ENCODE measurements at regions of chr12 and their contacts with region 1.

Region 1: GRCh38 chr12:4276524-4277204 is 3.1 kb downstream of the CCND2 start:
- DNase-seq: peak; percentile 89
- ATAC-seq: peak; percentile 51

Region 2: DNA sequence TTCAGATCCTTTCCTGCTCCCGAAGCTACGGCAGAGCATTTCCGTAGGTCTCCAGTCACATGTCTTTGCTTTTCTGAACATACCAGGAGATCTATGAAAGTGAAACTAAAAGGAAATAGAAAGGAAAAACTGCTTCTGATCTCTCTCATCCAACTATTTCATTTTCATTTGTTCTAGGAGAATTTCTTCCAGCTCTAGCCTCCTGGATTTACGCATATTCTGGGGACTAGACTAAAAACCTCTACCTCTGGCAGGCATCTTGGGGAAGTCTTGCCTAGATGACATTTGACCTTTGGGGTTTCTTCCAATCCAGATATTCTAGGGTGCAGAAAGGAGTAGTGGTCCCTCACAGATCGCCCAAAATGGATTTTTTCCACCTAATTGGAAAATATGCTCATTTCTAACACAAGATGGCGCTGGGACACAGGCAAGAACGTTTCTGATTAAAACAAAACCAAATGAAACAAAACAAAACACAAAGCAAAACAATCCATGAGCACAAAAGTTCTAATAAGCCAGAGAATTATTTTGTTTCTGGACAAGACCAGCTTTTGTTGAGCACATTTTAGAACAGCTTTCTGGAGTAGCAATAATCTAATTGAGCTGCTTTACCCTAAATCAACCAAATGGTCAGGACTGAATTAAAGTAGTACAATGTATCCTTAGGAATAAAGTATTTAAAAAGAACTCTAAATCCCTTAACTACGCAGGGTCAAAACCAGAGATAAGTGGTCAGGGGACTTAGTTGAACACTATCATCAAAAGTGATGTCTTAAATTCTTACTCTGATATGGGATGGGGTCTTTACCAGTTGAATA is 391.2 kb before region 1 on chr12:
- intact Hi-C with region 1: loop called (anchors 1 kb)
- DNase-seq: no peak
- ATAC-seq: peak; percentile 39

Region 3: DNA sequence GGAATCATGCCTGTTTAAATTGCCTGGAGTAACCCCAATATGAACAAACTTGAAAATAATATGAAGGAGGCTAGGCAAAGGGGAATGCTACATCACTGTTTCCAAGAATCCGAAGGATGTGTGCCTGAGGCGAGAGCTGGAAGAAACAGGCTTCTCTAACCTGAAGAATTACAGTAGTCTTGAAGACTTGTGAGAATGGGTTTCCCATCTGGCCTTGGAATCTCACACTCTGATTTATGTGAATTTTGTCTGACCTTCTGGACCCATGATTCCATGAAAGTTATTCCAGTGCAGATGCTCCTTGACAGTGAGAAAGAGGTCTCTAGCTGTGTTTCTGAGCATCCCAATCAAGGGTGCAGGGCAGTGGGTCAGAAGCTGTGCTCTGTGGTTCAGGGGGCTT is 281.4 kb before region 1 on chr12:
- intact Hi-C with region 1: loop called (anchors 1 kb)
- DNase-seq: no peak
- ATAC-seq: no peak

Region 4: DNA sequence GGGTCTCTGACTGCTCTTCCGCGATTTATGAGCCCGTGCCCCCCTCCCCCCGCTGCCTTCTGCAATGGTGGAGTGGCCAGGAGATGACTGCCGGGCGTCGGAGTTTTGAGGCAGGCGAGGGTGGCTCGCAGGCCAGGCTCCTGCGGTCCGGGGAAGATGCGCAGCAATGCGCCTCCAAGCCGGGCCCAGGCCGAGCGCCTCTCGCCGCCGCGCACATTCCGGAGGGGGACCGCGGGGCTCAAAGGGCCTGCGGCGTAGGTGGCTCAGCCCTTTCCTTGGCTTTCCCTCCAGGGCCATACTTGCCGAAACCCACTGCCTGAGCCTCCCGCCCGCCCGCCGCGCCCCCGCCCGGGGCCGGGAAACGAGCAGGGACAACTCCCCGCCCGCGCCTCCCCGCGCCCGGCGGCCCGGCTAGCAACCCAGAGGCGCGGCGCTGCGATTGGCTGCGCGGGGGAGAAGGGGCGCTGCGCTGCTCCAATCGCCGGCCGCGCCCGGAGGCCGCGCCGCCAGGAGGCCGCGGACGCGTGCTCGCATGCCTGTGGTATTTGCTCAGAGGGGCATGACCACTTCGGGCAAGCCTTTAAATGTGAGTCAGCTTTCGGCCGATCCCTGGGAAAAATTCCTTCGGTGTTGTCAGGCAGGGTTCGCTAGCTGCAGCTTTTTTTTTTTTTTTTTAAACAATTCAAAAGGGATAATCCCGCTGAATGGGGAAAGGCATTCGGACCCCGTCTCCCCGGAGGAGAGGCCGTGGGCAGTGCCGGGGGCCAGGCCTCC is 245.5 kb before region 1 on chr12:
- intact Hi-C with region 1: loop called (anchors 5 kb)
- DNase-seq: peak; percentile 90
- ATAC-seq: peak; percentile 98

Region 5: GRCh38 chr12:4107436-4107878 is 169.2 kb before region 1 on chr12:
- intact Hi-C with region 1: loop called (anchors 2 kb)
- DNase-seq: no peak
- ATAC-seq: peak; percentile 62

Region 6: DNA sequence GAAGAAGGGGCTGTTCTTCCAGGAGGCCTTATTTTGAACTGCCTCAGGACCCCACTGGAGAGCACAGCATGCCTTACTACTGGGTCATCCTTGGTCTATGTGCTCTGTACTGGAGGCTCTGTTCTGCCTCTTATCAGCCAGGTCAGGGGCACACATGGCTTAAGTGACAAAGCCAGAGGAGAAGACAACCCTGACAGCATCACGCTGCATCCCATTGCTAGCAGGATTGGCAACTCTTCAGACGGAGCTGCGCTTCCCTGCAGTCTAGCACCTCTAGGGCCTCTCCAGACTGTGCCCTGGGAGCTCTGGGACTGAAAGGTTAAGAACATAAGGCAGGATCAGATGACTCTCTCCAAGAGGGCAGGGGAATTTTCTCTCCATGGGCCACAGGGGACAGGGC is 27.1 kb after region 1 on chr12:
- intact Hi-C with region 1: loop called (anchors 2 kb)
- DNase-seq: no peak
- ATAC-seq: peak; percentile 48